ENCODE measurements at regions of chr6 and their contacts with region 1.

Region 1: DNA sequence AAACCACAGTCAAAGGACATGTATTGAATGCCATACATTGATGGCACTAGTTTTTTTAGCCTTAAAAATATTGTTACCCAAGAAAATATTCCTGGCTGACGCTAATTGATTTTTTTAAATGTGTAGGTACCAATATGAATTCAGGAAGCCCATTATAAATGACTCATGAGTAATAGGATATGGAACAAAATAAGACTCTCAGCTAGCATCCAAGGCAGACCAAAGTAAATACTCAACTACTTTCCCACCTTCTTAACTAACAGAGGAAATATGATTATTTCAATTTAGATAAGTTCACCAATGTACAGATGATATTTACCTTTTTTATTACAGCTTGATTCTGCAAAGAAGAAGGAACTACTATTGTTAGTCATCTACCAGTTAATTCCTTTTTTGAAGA is 43.2 kb upstream of the TXNDC5 start:
- DNase-seq: no peak

Region 2: GRCh38 chr6:7454696-7455358 is 498.9 kb before region 1 on chr6:
- intact Hi-C with region 1: no loop called
- DNase-seq: no peak

Region 3: GRCh38 chr6:7819431-7820015 is 134.2 kb before region 1 on chr6:
- intact Hi-C with region 1: no loop called
- DNase-seq: no peak

Region 4: GRCh38 chr6:7939184-7939863 is 14.4 kb before region 1 on chr6:
- intact Hi-C with region 1: loop called in 1 of 2 experiments (anchors 2 kb)
- DNase-seq: no peak